ENCODE measurements at regions of chr11 and their contacts with region 1.

Region 1: DNA sequence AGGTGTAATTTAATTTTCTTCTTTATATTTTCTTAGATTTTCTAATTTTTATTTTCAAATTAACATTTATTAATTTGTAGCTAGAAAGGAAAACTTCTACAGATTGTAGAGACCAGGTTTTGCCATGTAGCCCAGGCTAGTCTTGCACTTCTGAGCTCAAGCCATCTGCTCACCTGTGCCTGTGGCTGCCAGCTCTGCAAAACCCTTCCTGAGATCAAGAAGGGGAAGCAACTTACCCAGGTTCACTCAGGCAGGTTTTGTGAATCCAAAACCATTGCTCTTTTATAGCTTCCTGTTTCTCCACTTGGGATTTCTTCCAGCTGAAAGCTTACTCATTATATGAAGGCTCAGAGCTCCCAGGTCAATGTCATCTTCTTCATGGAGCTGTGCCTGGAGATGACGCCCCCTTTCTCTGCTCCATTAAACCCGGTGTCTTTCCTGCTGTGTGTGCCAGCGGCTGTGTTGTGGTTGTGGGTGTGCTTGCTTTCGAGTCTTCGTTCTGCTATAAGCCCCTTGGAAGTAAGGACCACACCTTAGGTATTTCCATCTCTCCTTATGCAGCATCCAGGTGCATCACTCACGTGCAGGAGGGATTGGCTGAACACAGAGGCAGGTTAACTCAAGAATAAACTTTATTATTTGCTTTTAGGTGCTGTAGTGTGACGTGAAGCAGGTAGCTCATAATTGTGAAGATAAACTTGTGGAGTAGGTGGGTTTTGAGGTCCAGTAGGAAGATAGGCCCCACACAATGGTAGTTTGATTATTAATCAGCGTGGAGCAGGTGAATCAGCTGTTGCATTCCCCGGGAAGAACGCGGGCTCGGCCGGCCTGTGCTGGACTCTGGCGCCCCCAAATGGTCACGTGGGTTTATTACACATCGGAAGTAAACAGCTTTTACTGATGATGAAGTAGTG is 42.2 kb upstream of the INCENP start:
- DNase-seq: peak; percentile 77
- CTCF ChIP-seq: peak; percentile 83

Region 2: GRCh38 chr11:61816736-61817455 is 264.7 kb before region 1 on chr11 and contains the start of gene FADS1:
- CTCF ChIA-PET with region 1: interaction called, 11 read pairs
- POLR2A ChIA-PET with region 1: no interaction called
- DNase-seq: peak; percentile 85
- CTCF ChIP-seq: peak; percentile 64

Region 3: GRCh38 chr11:61891331-61892084 is 190.1 kb before region 1 on chr11 and contains the start of gene FADS3:
- CTCF ChIA-PET with region 1: interaction called, 424 read pairs
- POLR2A ChIA-PET with region 1: no interaction called
- DNase-seq: peak; percentile 84
- CTCF ChIP-seq: no peak

Region 4: GRCh38 chr11:61928606-61929005 is 153.0 kb before region 1 on chr11:
- CTCF ChIA-PET with region 1: interaction called, 12 read pairs
- POLR2A ChIA-PET with region 1: no interaction called
- DNase-seq: no peak
- CTCF ChIP-seq: no peak

Region 5: DNA sequence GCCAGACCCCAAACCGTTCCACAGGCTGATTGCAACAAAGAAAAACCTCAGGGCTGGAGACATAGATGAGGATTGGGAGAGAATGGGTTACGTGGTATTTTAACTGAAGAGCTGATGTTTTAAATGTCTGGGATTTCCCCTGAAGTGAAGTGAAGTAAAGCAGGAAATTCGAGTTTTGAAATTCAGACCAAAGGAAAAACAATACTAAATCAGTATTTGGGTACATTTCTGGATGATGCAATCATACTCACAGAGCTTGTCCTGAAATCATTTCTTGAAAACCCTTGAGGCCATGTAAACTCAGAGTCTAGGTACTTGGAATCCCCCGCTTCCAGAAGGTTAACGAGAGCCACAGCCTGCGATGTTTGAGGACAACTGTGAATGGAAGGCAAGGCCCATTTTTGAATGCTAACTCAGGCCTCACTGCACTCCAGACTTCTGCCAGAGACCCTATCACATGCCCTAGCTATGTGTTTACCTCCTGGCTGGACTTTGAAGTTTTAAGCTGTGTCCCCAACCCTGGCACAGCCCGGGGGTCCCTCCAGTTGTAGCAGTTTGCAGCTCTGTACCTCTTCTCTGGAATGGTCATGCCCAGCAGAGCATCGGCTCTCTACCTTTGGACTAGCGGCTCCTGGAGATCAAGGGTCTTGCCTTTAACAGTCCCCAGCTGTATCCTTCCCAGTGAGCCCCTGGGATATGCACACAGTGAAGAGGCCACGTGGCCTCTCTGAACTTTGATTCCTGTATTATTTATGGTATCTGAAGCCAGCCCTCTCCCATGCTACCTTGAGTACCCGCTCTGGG is 108.8 kb before region 1 on chr11:
- CTCF ChIA-PET with region 1: interaction called, 14 read pairs
- POLR2A ChIA-PET with region 1: interaction called, 4 read pairs
- DNase-seq: no peak
- CTCF ChIP-seq: no peak

Region 6: GRCh38 chr11:62010935-62011528 is 70.6 kb before region 1 on chr11:
- CTCF ChIA-PET with region 1: no interaction called
- POLR2A ChIA-PET with region 1: no interaction called
- DNase-seq: no peak
- CTCF ChIP-seq: no peak

Region 7: DNA sequence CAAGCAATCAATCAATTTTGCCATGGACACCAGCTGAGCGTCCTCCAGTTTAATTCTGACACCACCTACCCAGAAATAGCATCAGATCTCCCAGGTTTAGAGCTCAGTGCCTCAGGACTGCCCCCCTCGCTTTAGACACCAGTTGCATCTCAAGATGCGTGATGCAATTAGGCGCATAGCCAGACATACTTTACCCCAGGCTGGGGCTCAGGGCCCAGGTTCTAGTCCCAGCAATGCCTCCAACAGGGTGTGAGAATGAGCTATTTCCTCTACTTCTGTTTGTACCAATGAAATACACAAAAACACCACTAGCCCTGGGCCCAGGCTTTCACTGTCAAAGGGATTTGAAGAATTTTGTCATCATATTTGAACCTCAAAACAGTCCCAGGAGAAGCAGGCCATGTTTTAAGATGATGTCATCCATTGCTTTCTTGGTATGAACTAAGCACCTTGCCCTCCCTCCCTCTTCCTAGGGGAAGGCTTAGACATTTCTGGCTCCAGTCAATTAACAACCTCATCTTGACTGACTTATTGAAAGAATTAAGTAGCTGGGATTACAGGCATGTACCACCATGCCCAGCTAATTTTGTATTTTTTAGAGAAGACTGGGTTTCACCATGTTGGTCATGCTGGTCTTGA is 19.3 kb before region 1 on chr11:
- CTCF ChIA-PET with region 1: interaction called, 27 read pairs
- POLR2A ChIA-PET with region 1: no interaction called
- DNase-seq: no peak
- CTCF ChIP-seq: no peak

Measured in GM10248 (cell line).